Brain microvascular endothelial cell (primary cell): ENCODE measurements at regions of chr4 and their contacts with region 1.

Region 1: DNA sequence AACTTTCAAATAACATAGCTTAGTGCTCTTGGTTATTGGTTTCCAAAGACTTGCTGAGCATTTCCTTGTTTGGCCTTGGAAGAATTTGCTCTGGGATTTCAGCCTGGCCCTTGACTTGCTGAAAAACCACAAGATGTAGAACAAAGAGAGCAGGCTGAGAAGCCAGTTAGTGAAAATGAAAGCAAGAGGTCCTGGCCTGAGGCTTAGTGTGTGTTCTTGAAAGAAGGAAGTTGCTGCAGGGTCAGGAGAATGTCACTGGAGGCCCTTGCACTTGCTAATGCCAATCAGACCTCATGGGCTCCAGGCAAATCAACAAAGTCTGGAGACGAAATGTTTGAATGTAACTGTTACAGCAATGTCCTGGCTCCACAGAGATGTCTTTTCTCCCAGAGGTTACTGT is 79.4 kb downstream of the SYNPO2 start:
- DNase-seq: peak; percentile 88
- H3K4me3 ChIP-seq: no peak overlapping the region
- H3K27ac ChIP-seq: peak overlapping the region; percentile 49
- H3K27me3 ChIP-seq: no peaks in the 10 kb centered on the region
- CTCF ChIP-seq: no peak

Region 2: DNA sequence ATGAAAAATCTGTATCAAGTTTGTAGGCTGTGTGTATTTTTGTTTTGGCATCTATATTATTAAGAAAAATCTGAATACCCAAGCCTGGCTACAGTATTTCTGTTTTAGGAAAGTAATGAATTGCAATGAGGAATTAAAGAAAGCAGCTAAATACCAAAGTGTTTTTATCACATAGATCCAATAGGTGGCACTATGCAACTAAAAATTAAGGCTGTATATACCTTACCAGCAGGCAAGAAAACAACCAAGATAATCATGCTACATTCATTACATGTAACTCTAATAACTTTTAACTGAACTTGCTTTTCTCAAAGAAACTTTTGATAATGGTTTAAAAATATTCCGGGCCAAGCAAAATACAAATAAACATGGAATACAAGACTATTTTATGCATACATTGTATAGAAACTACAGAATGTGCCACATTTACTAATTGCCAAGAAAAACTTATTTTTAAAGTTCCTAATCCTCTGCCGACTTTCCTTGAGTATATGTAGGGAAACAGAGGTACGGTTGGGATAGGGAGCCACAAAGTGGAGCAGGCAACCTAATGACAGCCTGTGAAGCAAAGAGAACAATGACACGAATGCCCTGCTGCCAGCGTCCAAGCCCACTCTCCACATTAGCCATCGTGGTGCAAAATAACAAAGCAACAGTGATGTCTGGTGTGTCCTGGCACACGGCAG is 195.8 kb before region 1 on chr4:
- in situ Hi-C with region 1: loop called (anchors 25 kb)
- DNase-seq: no peak
- H3K4me3 ChIP-seq: no peak overlapping the region
- H3K27ac ChIP-seq: no peak overlapping the region
- H3K27me3 ChIP-seq: no peaks in the 10 kb centered on the region
- CTCF ChIP-seq: peak; percentile 33